PC-9 (cell line): ENCODE measurements at regions of chr4 and their contacts with region 1.

Region 1: DNA sequence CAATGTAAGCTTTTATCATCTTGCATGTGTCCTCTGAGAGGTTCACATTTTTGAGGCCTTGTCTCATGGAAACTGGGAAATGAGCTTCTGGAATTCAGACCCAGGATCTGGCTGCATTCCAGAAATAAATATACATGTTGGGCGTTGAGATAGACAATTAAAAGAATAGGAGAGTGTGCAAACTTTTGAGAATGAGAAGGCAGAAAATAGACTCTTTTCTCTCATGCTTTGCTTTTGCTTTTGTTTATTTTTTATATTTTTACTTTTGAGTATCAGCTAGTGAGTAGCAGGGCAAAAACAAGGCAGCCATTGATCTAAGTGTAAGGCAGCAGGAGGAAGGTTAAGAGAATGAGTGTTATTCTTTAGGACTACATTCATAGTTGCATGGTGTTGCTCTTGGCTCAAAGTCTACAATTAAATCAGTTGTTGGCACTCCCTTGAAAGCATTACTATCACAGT is 12.4 kb downstream of the SHROOM3 start:
- DNase-seq: no peak
- H3K4me3 ChIP-seq: no peak overlapping the region
- H3K27ac ChIP-seq: no peak overlapping the region
- H3K4me1 ChIP-seq: no peaks in the 10 kb centered on the region
- H3K27me3 ChIP-seq: no peaks in the 10 kb centered on the region
- CTCF ChIP-seq: no peak

Region 2: DNA sequence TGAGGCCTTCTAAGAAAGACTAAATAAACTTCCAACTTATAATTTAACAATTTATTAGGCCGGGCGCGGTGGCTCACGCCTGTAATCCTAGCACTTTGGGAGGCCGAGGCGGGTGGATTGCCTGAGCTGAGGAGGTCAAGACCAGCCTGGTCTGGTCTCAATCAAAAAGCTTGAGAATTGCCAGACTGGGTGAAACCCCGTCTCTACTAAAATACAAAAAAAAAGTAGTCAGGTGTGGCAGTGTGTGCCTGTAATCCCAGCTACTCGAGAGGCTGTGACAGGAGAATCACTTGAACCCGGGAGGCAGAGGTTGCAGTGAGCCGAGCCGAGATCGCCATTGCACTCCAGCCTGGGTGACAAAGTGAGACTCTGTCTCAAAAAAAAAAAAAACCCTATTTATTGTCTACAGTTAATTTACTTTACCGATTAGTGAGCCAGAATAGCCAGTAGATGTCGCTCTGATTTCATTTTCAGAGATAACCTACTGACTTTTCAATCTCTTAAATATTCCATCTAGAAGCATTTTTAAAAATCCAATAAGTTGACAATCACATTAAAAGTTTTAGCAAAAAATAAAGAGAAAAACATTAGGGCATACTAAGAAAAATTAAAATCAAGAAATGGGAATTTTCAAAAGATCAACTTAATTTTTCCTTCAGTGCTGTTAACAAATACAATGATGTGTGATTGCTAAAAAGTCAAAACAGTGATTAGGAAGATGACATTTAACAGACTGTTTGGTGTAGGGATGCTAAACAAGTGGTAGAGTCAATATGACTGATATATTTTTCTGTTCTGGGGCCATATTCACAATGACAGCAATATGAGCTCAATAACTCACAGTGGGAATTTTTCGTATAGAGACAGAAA is 16.7 kb before region 1 on chr4:
- CTCF ChIA-PET with region 1: no interaction called
- POLR2A ChIA-PET with region 1: interaction called, 31 read pairs
- intact Hi-C with region 1: no loop called
- DNase-seq: peak in 1 of 2 experiments; percentile 55
- H3K4me3 ChIP-seq: peak overlapping the region; percentile 33; the same call in 1 of the 2 replicates
- H3K27ac ChIP-seq: no peak overlapping the region
- H3K4me1 ChIP-seq: no peaks in the 10 kb centered on the region
- H3K27me3 ChIP-seq: no peaks in the 10 kb centered on the region
- CTCF ChIP-seq: peak; percentile 75